Activated CD4-positive, alpha-beta T cell treated with anti-CD3 and anti-CD28 coated beads, Interleukin-2, amount 10 ng/mL, durations not matched to agents 7 days and 5 days (primary cell): ENCODE measurements at regions of chr16 and their contacts with region 1.

Region 1: DNA sequence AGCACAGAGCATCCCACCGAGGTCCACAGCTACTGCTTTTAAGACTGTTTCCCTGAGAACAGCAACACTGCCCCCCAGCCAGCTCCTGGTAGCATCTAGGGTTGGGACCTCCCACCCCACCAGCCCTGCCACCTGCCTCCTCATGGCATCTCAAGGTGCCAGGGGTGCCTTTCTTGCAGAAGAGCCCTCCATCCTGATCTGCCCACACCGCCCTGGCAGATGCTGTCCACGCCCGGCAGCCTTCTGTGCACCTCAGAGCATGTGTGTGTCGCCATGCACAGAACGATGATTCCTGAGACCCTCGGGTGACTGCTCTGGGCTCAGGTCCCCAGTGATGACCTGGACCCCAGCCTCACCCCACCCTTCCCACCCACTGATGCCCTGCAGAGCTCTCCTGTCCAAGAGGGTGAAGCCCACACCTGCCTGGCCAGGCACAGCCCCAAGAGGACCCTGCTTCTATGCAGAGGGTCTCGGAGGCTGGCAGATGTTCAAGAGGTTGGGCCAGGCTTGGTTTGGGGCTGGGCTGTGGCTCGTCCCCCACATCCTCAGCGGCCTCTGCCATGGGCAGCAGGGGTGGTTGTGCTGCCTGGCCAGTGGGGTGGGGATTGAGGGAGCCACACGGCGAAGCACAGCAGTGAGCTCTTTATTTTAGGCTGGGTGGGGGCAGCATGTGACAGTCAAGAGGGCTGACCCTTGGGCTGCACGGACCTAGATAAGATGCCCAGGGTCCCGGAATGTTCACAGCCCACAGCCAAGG is 5.2 kb upstream of the SPATA2L start:
- DNase-seq: no peak
- H3K4me3 Mint-ChIP-seq: no peak overlapping the region
- H3K27ac Mint-ChIP-seq: no peak overlapping the region
- H3K4me1 Mint-ChIP-seq: peaks cover 14% of the 10 kb centered on the region
- H3K27me3 Mint-ChIP-seq: no peaks in the 10 kb centered on the region

Region 2: GRCh38 chr16:89720813-89721545 is 14.3 kb after region 1 on chr16 and contains the starts of genes VPS9D1 and ZNF276:
- CTCF ChIA-PET with region 1: interaction called, 46 read pairs
- POLR2A ChIA-PET with region 1: no interaction called
- DNase-seq: peak; percentile 84
- H3K4me3 Mint-ChIP-seq: peak within 1 kb of the TSS; percentile 99
- H3K27ac Mint-ChIP-seq: peak within 1 kb of the TSS; percentile 98
- H3K4me1 Mint-ChIP-seq: peaks cover 31% of the 10 kb centered on the region
- H3K27me3 Mint-ChIP-seq: no peaks in the 10 kb centered on the region
- total RNA-seq, gene VPS9D1: 10.8 to 13.4 TPM
- total RNA-seq, gene ZNF276: 79.5 to 96.5 TPM

Region 3: DNA sequence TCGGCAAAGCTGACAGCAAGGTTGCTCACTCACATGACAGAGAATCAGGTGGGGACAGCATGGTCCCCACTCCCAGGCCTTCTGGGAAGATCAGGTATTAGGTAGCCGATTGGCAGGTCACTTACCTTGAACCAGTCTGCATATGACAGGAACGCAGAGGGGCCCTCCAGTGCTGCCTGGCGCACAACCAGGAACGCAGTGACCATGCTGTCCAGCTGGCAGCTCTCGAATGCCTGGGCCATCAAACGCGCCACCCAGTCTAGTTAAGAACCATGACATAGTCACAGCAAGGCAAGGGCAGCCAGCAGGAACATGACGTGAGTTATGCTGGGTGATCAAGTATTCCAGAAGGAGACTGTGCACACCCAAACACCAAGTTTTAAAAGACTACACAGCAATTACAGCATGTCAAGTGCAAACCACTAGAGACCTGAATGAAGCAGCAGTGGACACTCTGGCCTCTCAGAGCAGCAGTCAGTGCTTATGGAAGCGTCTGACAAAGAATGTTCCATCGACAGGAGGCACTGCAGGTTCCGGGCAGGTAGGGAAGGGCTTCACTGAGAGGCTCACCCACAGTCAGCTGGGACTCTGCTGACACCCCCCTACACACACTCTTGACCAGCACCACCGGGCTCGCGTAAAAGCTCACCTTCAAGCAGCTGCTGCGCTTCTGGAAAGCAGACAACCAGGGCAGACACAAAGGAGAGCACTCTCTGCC is 84.8 kb after region 1 on chr16:
- CTCF ChIA-PET with region 1: interaction called, 29 read pairs
- POLR2A ChIA-PET with region 1: no interaction called
- DNase-seq: no peak
- H3K4me3 Mint-ChIP-seq: no peak overlapping the region
- H3K27ac Mint-ChIP-seq: no peak overlapping the region
- H3K4me1 Mint-ChIP-seq: peaks cover 14% of the 10 kb centered on the region
- H3K27me3 Mint-ChIP-seq: no peaks in the 10 kb centered on the region